CD4-positive, alpha-beta memory T cell (primary cell): ENCODE measurements at regions of chr14 and their contacts with region 1.

Region 1: DNA sequence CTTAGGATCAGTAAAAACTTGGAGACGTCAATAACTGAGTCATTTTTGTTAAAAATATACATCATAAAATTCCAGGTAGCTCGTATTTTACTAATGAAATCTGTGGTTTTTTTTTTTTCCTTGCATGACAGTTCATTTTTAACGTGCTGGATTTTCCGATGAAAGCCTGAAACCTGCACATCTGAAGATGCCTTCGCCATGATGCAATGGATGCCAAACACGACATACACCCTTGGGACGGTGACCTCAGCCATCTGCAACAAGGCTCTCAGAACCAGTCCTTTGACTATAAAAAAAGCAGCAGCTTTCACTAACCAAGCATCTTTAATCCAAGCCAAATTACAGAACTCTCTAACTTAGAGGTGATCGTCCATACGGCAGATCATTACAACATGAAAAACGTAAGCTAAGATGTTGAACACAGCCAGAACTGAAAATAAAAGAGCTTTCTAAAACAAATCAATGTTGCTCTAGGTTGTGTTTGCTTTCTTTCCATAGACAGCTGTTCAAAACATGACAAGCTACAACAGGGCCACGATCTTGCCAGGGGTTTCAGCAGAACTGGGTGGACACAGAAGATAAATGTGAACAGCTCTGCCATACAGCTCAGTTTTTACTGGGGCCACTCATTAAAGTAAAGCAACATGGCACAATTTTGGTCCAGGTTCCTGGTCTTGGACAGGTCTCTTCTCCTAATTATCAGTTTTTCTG is 7.8 kb downstream of the NIN start:
- DNase-seq: no peak
- H3K4me3 ChIP-seq: no peak overlapping the region
- H3K4me3 Mint-ChIP-seq: peak overlapping the region; percentile 28 to 83 (median 60)
- H3K27ac ChIP-seq: peak overlapping the region; percentile 56
- H3K27ac Mint-ChIP-seq: peak overlapping the region; percentile 82 to 98 (median 94)
- H3K4me1 ChIP-seq: peaks cover 97% of the 10 kb centered on the region
- H3K4me1 Mint-ChIP-seq: peaks cover 75 to 92% (median 85%) of the 10 kb centered on the region in 4 donors
- H3K27me3 ChIP-seq: no peaks in the 10 kb centered on the region
- H3K27me3 Mint-ChIP-seq: no peaks in the 10 kb centered on the region

Region 2: DNA sequence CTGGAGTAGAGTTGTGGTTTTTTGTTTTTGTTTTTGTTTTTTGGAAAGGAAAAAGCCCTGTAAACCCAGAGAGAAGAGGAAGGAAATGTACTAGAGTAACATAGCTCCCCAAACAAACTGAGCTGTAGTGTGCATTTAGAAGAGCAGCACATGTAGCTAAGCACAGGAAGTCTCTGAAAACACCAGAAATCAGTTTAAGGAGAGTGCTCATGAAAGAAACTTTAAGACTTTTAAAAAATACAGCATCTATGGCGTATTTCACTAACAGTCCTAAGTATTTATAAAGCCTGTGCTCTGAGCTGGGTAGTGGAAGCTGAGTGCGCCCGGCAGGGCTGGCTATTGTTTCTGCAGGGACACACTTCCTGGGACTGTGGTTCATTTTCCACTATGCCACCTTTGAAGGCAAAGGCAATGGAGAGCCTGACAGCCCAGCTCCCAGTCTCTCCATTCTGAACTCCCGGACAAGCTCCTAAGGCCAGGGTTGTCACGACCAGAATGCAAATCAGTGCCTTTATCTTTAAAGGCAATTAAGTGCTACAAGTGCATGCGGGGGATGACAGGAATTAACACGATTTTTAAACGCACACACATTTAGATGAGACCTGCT is 37.6 kb before region 1 on chr14:
- CTCF ChIA-PET with region 1: interaction called, 6 read pairs
- POLR2A ChIA-PET with region 1: interaction called, 28 read pairs
- intact Hi-C with region 1: no loop called
- DNase-seq: peak in 1 of 5 donors; percentile 22
- H3K4me3 ChIP-seq: no peak overlapping the region
- H3K4me3 Mint-ChIP-seq: peak overlapping the region; percentile 56 to 91 (median 74)
- H3K27ac ChIP-seq: peak overlapping the region; percentile 46
- H3K27ac Mint-ChIP-seq: peak overlapping the region; percentile 82 to 96 (median 88)
- H3K4me1 ChIP-seq: peaks cover 69% of the 10 kb centered on the region
- H3K4me1 Mint-ChIP-seq: peaks cover 52 to 89% (median 72%) of the 10 kb centered on the region in 4 donors
- H3K27me3 ChIP-seq: no peaks in the 10 kb centered on the region
- H3K27me3 Mint-ChIP-seq: no peaks in the 10 kb centered on the region

Region 3: GRCh38 chr14:50792051-50792477 is 31.1 kb before region 1 on chr14:
- CTCF ChIA-PET with region 1: interaction called, 6 read pairs
- POLR2A ChIA-PET with region 1: interaction called, 28 read pairs
- intact Hi-C with region 1: no loop called
- DNase-seq: peak in 2 of 5 donors; percentile 17 to 26
- H3K4me3 ChIP-seq: peak overlapping the region in 1 of 2 donors; percentile 48
- H3K4me3 Mint-ChIP-seq: peak overlapping the region; percentile 4 to 81 (median 74)
- H3K27ac ChIP-seq: peak overlapping the region; percentile 24
- H3K27ac Mint-ChIP-seq: peak overlapping the region; percentile 64 to 92 (median 88)
- H3K4me1 ChIP-seq: peaks cover 60% of the 10 kb centered on the region
- H3K4me1 Mint-ChIP-seq: peaks cover 56 to 86% (median 70%) of the 10 kb centered on the region in 4 donors
- H3K27me3 ChIP-seq: no peaks in the 10 kb centered on the region
- H3K27me3 Mint-ChIP-seq: no peaks in the 10 kb centered on the region